HEK293 (cell line): ENCODE measurements at regions of chr22 and their contacts with region 1.

Region 1: GRCh38 chr22:37498289-37498909 is 12.2 kb upstream of the MFNG start:
- H3K4me3 ChIP-seq: no peak overlapping the region
- H3K27ac ChIP-seq: no peak overlapping the region
- H3K4me1 ChIP-seq: no peaks in the 10 kb centered on the region
- CTCF ChIP-seq: peak; percentile 84

Region 2: GRCh38 chr22:37486224-37486845 is 12.1 kb before region 1 on chr22 and contains the start of gene MFNG:
- CTCF ChIA-PET with region 1: interaction called, 23 read pairs
- POLR2A ChIA-PET with region 1: interaction called, 8 read pairs
- H3K4me3 ChIP-seq: no peak within 1 kb of the TSS
- H3K27ac ChIP-seq: no peak within 1 kb of the TSS
- H3K4me1 ChIP-seq: 0 out of 2 replicates have a peak, but pooled peaks cover 6% of the 10 kb centered on the region
- CTCF ChIP-seq: no peak

Region 3: GRCh38 chr22:37508431-37508992 is 10.1 kb after region 1 on chr22:
- CTCF ChIA-PET with region 1: interaction called, 14 read pairs
- POLR2A ChIA-PET with region 1: interaction called, 5 read pairs
- H3K4me3 ChIP-seq: no peak overlapping the region
- H3K27ac ChIP-seq: no peak overlapping the region
- H3K4me1 ChIP-seq: peaks cover 7% of the 10 kb centered on the region
- CTCF ChIP-seq: no peak

Region 4: DNA sequence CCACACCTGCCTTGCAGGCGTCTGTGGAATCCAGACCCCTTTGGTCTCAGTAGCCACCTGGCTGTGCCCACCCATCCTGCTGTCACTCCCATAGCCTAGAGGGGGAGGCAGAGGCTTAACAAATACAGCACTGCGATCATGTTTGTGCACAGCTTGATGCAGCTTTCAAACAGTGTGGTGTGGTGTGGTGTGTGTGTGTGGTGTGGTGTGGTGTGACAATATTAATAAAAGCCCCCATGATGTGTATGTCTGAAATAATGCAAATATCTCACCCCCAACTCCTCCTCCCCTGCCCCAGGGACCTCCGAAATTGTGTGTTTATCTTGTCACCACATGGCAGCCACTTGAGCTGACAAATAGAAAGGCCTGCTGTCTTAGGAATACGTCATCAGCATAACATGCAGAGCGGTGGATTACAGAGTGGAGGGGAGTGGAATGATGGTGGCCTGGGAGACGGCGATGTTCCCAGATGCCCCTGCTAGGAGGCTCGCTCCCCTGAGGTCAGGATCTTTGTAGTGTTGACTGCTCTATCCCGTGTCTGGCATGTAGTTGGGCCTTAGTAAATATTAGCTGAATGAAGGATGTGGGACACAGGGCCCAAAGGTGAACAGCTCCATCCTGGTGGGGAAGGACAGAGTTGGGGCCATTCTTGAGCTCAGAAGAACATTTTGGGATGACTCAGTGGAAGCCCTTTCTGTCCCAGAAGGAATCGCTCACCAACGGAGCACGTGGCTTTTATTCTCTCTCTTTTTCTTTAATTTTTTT is 162.9 kb after region 1 on chr22:
- CTCF ChIA-PET with region 1: no interaction called
- POLR2A ChIA-PET with region 1: no interaction called
- H3K4me3 ChIP-seq: peak overlapping the region; percentile 14
- H3K27ac ChIP-seq: peak overlapping the region; percentile 40
- H3K4me1 ChIP-seq: peaks cover 12% of the 10 kb centered on the region
- CTCF ChIP-seq: peak; percentile 55